ENCODE measurements at regions of chr5 and their contacts with region 1.

Region 1: GRCh38 chr5:88690409-88691229 is 192.4 kb downstream of the MEF2C start:
- DNase-seq: peak; percentile 78
- ATAC-seq: peak; percentile 98

Region 2: DNA sequence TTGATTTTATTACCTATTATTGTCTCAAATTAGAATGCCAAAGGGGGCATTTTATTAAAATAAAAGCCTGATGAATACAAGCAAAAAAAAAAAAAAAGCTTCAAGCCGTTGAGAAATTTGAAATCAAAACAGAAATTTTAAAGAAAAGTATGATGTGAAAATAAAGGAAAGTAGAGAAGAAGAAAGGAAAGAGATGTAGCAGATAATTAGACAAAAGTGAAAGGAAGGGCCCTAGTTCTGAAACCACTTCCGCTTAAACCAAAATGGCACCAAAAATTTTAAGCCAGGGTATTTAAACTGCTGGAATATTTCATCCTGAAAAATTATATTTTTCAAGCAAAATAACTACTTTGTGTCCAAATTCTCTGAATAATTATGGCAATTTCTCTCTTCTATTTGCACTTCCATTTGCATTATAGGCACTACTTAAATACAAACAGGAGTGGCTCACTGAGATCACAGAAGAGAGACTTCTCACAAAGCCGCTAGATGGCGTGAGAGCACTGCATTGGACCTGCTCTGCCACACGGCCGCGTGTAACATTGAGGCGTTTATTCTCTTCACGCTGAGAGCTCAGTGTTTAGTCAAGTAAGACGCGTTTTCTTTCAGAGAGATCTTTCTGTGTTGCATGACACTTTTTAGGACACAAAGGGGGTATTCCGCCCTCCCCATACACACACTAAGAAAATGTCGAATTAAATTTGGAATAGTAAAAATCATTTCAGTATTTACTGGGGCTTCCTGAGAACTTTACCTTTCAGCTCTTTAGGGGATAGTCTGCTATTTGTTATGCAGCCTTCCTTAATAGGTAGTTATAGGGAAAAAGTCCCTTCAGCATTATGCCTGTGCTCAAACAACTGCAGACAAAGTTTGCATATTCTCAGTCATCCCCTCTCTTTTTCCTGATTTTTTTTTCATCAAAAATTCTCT is 909.5 kb before region 1 on chr5:
- intact Hi-C with region 1: loop called (anchors 2 kb)
- DNase-seq: peak; percentile 74
- ATAC-seq: peak; percentile 98